Activated naive CD4-positive, alpha-beta T cell treated with anti-CD3 and anti-CD28 coated beads for 36 hours (primary cell): ENCODE measurements at regions of chr4 and their contacts with region 1.

Region 1: DNA sequence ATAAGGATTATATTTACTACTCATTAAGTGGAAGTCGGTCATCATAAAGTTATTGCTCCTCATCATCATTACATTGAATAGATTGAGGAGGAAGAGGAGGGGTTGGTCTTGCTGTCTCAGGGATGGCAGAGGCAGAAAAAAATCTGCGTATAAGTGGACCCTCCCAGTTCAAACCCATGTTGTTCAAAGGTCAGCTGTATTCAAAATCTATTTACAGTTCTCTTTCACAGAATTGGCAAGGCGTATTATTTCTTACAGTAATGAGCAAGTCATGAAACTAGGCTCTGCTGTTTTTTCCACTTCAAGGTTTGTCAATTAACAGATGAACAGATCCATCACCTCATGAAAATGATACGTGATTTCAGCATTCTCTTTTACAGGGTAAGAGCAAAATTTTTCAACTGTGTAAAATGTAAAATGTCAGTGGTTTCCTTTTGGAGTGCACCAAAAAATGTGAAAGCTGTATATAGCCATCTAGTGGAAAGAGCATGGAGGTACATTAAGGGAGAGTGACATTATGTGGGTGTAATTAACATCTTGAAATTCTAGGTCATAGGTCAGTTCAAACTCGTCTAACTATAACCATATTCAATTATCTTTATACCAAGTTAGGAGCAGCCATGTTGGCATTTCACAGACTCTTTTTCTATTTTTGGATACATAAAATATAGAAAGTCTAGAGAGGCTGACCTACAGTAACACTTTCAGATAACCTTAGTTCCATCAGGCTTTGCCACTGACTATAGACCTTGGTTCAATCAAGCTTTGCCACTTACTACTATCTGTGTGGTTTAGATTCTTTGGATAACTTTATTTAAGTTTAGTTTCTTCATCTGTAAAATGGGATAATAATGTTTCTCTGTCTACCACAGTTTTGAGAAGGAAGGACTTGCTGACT is 30.1 kb downstream of the NEIL3 start:
- DNase-seq: no peak
- H3K4me3 Mint-ChIP-seq: no peak overlapping the region
- H3K27ac Mint-ChIP-seq: no peak overlapping the region
- H3K4me1 Mint-ChIP-seq: peaks cover 5% of the 10 kb centered on the region
- H3K27me3 Mint-ChIP-seq: no peaks in the 10 kb centered on the region

Region 2: GRCh38 chr4:176548571-176548970 is 791.2 kb before region 1 on chr4:
- CTCF ChIA-PET with region 1: no interaction called
- intact Hi-C with region 1: no loop called
- DNase-seq: no peak
- H3K4me3 Mint-ChIP-seq: no peak overlapping the region
- H3K27ac Mint-ChIP-seq: no peak overlapping the region
- H3K4me1 Mint-ChIP-seq: no peaks in the 10 kb centered on the region
- H3K27me3 Mint-ChIP-seq: peaks cover 1% of the 10 kb centered on the region

Region 3: DNA sequence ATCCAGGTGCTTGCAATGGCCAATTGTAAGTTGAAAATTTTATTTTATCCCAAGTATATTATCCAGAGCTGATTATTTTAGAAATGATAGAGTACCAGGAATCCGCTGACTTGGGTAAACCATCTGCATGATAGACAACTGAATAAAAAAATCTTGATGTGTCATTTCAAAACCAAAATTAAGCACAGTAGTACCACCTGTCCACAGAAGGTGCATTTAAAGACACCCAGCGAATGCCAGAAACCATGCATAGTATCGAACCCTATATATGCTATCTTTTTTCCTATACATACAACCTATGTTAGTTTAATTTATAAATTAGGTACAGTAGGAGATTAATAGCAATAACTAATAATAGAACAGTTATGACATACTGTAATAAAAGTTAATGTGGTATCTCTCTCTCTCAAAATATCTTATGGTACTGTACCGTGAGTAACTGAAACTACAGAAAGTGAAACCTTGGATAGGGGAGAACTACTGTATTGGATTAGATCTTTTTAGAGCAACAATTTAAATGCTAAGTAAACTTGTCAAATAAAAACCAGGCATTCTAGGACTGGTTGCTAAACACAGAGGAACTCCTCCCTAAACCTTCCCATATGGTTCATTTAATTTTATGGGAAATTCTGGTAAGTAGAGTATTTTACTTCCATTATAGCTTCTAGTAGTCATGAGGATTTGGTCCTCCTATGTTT is 23.8 kb before region 1 on chr4:
- CTCF ChIA-PET with region 1: interaction called, 3 read pairs
- intact Hi-C with region 1: loop called (anchors 2 kb)
- DNase-seq: no peak
- H3K4me3 Mint-ChIP-seq: no peak overlapping the region
- H3K27ac Mint-ChIP-seq: no peak overlapping the region
- H3K4me1 Mint-ChIP-seq: peaks cover 44% of the 10 kb centered on the region
- H3K27me3 Mint-ChIP-seq: no peaks in the 10 kb centered on the region